ENCODE measurements at regions of chr4 and their contacts with region 1.

Region 1: DNA sequence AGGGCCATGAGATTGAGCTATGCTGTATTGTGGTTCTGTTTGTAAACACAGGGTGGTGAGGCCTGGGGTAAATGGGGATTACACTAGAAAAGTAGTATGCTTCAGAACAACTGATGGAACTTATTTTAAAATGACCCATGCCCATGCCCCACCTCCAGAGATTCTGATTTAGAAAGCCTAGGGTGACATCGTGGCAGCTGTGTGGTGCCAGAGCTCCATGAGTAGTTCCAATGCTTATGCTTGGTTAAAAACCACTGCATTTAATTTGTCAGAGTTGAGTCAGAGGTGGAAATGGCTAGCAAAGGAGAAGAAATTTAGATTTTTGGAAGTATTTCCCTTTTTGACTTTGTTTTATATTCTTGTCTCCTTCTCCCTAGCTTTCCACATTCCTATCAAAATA is 63.4 kb upstream of the PDE5A start:
- DNase-seq: no peak
- ATAC-seq: peak in 1 of 2 donors; percentile 63
- H3K4me3 ChIP-seq: no peak overlapping the region
- H3K27ac ChIP-seq: no peak overlapping the region
- H3K4me1 ChIP-seq: peaks cover 0 to 8% of the 10 kb centered on the region in 2 donors
- H3K27me3 ChIP-seq: no peaks in the 10 kb centered on the region
- CTCF ChIP-seq: peak in 3 of 5 experiments; percentile 22 to 49 (median 26)
- POLR2A ChIP-seq: no peak

Region 2: DNA sequence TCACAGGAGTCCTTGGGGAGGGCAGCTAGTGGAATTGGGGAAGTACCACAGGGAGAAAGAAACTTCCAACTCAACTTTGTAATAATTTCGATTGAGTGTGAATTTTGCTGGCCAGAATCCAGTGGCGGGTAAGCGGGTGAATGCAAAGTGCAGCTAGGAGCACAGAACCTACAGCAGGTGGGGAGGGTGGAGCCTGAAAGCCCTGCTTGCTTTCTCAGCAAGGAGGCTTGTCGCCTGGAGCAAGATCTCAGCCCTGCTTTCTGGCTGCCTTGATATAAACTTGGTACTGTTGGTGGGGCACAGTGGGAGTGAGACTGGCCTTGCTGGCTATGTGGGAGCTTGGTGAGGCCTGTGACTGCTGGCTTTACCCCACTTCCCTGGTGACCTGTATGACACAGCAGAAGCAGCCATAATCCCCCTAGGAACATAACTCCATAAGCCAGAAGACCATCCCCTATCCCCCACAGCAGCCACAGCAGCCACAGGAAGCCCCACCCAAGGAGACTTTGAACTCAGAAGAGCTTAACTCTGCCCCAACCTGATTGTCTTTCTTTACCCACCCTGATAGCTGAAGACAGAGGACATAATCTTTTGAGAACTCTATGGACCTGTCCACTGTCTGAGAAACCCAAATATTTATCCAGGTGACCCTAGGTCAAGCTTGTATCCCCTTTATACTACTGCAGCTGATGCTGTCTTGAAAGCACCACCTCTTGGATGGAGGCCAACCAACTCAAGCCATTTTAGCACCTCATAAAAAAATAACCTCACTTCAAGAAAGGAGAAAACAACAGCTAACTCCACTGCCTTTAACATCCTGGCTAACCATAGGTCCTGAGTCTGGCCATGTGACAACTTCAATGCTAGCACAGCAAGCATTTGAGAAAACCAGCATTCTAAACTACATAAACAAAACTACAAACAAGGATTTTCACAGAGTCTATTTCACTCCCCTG is 23.8 kb after region 1 on chr4:
- in situ Hi-C with region 1: no loop called
- intact Hi-C with region 1: no loop called
- DNase-seq: no peak
- ATAC-seq: no peak
- H3K4me3 ChIP-seq: no peak overlapping the region
- H3K27ac ChIP-seq: no peak overlapping the region
- H3K4me1 ChIP-seq: no peaks in the 10 kb centered on the region
- H3K27me3 ChIP-seq: no peaks in the 10 kb centered on the region
- CTCF ChIP-seq: no peak
- POLR2A ChIP-seq: no peak

Region 3: GRCh38 chr4:120049732-120050494 is 357.9 kb after region 1 on chr4:
- in situ Hi-C with region 1: no loop called
- intact Hi-C with region 1: loop called (anchors 5 kb)
- DNase-seq: peak; percentile 51 to 73
- ATAC-seq: peak; percentile 90 to 92
- H3K4me3 ChIP-seq: peak overlapping the region in 3 of 4 donors; percentile 10 to 30 (median 29)
- H3K27ac ChIP-seq: peak overlapping the region; percentile 11 to 41 (median 28)
- H3K4me1 ChIP-seq: peaks cover 14 to 19% of the 10 kb centered on the region in 2 donors
- H3K27me3 ChIP-seq: no peaks in the 10 kb centered on the region
- CTCF ChIP-seq: peak; percentile 67 to 84 (median 79)
- POLR2A ChIP-seq: no peak

Measured in gastrocnemius medialis (tissue), 4 donors.